Activated CD4-positive, alpha-beta memory T cell treated with anti-CD3 and anti-CD28 coated beads, Interleukin-2, amount 10 ng/mL, durations not matched to agents 7 days and 5 days (primary cell): ENCODE measurements at regions of chr12 and their contacts with region 1.

Region 1: DNA sequence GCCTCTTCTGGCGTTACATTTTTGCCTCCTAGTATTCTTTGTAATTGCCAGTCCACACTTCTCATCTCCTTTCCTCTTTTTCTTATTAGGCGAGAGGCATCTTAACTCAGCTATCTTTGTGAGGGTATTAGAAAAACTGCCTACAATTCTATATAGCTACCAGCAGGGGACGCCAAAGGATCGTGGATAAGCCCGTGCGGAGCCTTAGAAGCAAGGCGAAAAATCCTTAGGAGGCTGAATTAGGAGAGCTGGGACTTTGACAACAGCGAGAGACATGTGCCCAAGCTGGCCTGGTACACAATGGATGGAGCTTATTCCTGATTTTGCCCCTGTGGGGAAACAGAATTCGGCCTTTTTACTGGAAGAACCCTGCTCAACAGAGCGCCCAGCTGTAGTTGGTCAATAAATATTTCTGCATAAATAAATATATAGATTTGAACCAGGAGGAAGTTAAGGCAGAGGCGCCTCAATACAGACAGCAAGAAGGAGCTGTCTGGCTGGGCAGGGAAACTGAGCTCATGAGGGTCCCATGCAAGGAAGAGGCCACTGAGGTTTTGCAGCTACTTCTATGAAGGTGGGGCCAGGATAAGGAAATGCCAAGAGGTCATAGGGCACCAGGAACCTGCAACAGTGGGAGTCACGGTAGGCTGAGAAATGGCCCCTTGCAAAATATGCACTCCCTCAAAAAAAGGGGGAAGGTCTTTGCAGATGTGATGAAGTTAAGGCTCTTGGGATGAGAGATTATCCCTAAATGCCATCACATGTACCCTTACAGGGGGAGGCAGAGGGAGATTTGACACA is 14.6 kb upstream of the RBM19 start:
- DNase-seq: peak; percentile 37
- H3K4me3 Mint-ChIP-seq: no peak overlapping the region
- H3K27ac Mint-ChIP-seq: no peak overlapping the region
- H3K4me1 Mint-ChIP-seq: no peaks in the 10 kb centered on the region
- H3K27me3 Mint-ChIP-seq: no peaks in the 10 kb centered on the region

Region 2: GRCh38 chr12:113826805-113827538 is 153.8 kb before region 1 on chr12:
- CTCF ChIA-PET with region 1: no interaction called
- POLR2A ChIA-PET with region 1: no interaction called
- DNase-seq: no peak
- H3K4me3 Mint-ChIP-seq: no peak overlapping the region
- H3K27ac Mint-ChIP-seq: no peak overlapping the region
- H3K4me1 Mint-ChIP-seq: no peaks in the 10 kb centered on the region
- H3K27me3 Mint-ChIP-seq: no peaks in the 10 kb centered on the region

Region 3: DNA sequence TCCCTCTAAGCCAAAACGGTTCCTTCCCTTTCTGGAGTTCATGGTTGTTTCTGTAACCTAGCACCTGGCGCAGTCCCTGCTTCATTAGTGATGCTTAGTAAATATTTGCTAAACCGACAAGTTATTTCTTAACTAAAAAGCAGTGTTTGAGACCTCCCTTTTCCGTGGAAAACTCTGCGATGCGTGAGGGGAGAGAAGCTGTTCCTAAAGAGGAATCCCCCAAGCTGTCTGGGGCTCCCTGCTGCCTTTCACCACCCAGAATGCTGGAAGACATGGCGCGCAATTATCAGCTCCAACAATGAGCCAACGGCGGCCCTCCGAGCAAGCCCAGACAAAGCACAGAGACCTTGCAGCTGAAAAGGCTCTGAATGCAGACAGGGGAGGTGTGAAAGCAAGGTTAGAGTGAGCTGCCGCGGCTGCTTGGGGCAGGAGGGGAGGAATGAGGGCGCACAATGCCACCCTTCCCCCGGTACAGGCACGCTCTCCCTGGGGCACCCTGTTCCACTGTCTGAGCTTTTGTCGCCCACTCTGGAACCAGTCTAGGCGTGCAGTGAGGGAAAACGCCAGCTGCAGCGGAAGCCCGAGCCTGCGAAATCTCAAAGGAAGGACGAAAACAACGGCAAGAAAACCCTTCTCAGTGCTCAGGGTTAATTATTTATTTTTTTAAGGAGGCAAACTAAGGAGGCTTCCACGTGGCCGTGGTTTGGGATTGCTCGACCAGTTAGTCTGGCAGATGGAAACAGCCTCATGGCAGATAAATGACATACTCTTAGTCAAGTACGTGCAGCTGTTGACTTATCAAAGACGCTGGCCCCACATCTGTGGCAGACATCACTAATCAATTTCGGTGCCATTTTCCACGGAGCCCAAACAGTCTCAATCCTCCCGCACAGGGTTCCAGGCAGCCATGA is 80.9 kb before region 1 on chr12:
- CTCF ChIA-PET with region 1: no interaction called
- POLR2A ChIA-PET with region 1: no interaction called
- DNase-seq: no peak
- H3K4me3 Mint-ChIP-seq: no peak overlapping the region
- H3K27ac Mint-ChIP-seq: no peak overlapping the region
- H3K4me1 Mint-ChIP-seq: no peaks in the 10 kb centered on the region
- H3K27me3 Mint-ChIP-seq: no peaks in the 10 kb centered on the region

Region 4: DNA sequence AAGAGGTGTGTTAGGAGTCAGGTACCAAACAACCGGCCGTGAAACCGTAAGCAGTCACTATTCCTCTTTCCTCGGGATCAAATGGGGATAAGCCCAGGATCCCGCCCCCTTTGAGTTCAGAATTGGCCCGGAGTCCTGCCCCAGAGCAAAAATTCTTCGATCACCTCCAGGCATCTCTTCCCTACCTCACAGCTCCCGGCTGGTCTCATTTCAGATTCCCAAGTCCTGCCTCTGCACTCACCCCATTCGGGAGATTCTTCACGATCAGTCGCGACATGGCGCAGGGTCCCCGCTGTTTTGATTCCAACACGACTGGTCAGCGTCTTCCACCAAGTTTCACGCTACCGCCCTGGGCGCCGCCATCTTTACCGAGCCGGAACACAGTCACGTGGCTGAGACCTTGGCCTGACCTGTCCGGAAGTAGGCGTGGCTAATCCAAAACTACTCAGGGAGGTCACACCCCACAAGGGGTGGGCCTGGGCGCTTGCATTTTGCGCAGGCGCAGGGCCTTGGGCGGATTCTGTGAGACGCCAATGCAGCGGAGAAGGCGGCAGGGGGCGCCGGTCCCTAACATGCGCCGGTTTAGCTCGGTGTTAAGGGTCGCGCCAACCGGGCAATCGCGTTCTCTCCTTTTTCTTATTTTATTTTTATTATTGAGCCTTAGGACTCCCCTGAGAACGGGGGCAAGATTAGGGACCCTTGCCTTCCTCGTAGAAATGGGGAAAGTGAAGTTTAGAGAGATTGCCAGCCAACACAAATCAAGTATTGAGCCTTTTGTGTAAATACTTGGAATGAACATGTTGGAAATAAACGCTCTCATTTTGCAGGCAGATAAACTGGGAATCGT is 14.6 kb before region 1 on chr12 and contains the start of gene RBM19:
- CTCF ChIA-PET with region 1: interaction called, 24 read pairs
- POLR2A ChIA-PET with region 1: interaction called, 4 read pairs
- DNase-seq: peak; percentile 98
- H3K4me3 Mint-ChIP-seq: peak within 1 kb of the TSS; percentile 98
- H3K27ac Mint-ChIP-seq: peak within 1 kb of the TSS; percentile 88
- H3K4me1 Mint-ChIP-seq: peaks cover 56% of the 10 kb centered on the region
- H3K27me3 Mint-ChIP-seq: peaks cover 4% of the 10 kb centered on the region
- total RNA-seq, gene RBM19: 31.5 to 32.4 TPM

Region 5: DNA sequence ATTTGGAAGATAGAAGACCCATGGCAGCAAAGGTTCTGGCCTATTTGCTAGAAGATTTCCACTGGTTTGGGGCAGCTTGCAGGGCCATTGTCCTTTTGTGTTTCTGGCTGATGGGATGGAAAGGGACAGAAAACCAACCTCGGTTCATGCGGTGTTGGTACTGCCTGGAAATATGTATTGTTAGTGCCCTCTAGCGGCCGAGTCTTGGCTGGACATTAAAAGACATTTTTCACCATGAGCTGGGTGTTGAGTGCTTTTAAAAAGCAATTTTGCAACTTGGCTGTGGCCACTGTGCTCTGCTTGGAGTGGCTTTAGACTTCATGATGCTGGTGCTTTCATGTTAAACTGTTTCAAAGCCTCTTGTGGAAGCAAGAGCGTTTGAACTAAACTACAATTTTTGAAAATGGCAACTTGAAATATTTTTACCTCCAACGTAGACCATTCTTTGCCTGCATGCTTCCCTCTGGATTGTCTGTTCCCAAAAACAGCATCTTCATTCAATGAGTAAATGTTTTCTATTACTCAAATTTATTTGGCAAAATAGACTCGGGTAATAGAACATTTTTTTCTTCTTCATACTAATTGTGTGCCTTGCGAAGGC is 527.9 kb after region 1 on chr12:
- CTCF ChIA-PET with region 1: interaction called, 64 read pairs
- POLR2A ChIA-PET with region 1: no interaction called
- DNase-seq: peak; percentile 58
- H3K4me3 Mint-ChIP-seq: no peak overlapping the region
- H3K27ac Mint-ChIP-seq: no peak overlapping the region
- H3K4me1 Mint-ChIP-seq: no peaks in the 10 kb centered on the region
- H3K27me3 Mint-ChIP-seq: peaks cover 5% of the 10 kb centered on the region

Region 6: DNA sequence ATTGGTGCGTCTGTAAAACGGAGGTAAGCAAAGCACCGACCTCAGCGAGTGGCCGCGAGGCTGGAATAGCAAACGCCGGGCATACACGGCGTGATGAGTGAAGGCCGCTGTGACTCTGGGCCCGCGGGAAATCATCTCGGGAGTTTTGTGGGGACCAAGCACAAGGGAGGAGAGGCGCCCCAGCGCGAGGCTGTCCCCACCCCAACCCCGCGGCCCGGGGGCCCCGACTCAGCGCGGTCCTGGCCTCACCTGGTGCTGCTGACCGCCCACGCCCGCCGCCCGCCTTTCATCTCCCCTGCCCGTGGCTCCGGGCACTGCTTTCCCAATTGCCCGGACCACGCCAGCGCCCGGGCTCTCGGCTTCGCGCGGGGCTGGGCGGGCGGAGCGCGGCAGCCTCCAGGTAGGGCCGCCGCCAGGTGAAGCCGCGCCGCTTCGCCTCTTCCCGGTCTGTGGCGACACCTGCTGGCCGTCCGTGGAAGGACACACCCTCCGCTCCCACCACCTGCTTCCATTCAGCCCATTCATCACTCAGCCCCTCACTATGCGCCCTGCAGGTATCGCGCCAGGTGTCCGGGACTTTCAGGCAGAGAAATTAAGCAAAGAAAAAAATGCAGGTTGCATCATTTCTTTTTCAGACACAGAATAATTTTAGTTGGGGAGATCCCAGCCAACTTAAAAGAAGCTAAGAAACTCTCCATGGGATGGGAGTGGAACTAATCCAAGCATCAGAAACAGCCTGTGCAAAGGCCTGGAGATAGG is 1936.4 kb after region 1 on chr12:
- CTCF ChIA-PET with region 1: interaction called, 11 read pairs
- POLR2A ChIA-PET with region 1: no interaction called
- DNase-seq: peak; percentile 71
- H3K4me3 Mint-ChIP-seq: no peak overlapping the region
- H3K27ac Mint-ChIP-seq: no peak overlapping the region
- H3K4me1 Mint-ChIP-seq: peaks cover 2% of the 10 kb centered on the region
- H3K27me3 Mint-ChIP-seq: peaks cover 27% of the 10 kb centered on the region